ENCODE measurements at regions of chr7 and their contacts with region 1.

Region 1: DNA sequence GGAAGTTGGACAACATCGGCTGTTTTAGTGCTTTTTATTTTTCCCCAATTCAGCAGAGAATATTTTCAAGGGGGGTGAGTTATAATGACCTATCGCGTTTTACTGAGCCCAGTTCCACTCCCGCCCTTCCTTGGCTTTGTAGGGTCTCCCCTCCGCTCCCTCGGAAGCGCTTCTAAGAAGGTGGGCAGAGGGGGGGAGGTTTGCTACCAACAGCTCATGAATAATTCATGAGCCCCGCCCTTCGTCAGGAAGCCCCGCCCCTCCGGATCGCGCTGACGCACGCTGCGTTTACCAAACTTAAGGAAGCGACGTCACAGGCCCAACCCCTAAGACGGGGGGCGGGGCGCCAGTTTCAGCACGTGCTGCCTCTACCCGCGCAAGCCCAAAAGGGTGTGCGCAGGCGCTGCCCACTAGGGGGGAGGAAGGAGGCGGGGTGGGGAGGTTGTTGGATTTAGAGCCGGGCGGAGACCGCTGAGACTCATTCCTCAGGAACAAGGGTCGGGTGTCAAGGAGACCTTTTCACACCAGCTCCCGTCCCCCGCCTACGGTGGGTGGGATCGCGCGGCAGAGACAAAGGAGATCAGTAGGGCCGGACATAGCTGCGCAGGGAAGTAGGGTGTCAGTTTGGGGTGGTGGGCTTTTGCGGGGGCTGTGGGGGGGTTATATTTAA is 529 bp upstream of the MEPCE start:
- DNase-seq: peak; percentile 93 to 100
- ATAC-seq: peak; percentile 63 to 73
- H3K4me3 ChIP-seq: peak overlapping the region; percentile 86
- H3K27ac ChIP-seq: peak overlapping the region; percentile 93 to 100
- H3K4me1 ChIP-seq: peaks cover 26% of the 10 kb centered on the region; the same call in 2 of the 3 replicates
- CTCF ChIP-seq: no peak
- EP300 ChIP-seq: no peak
- POLR2A ChIP-seq: peak; percentile 93
- RAD21 ChIP-seq: no peak

Region 2: DNA sequence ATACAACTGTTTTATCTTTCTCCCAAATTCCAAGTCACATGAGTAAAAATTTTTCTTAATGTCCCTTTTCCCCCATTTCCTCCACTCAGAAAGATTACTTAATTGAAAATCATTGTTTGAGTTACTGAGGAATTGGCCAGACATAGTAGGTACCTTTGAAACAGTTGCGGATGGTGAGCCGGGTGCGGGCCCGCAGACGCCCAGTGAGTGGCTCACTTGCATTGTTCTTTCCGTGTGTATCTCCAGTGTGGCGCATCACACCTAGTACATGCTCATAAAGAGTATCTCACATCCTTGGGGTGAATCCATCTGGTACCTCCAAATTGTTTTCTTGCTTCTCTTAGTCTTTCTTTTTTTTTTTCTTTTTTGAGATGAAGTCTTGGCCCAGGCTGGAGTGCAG is 1536.5 kb before region 1 on chr7:
- CTCF ChIA-PET with region 1: no interaction called
- POLR2A ChIA-PET with region 1: interaction called, 11 read pairs
- DNase-seq: no peak
- ATAC-seq: no peak
- H3K4me3 ChIP-seq: no peak overlapping the region
- H3K27ac ChIP-seq: no peak overlapping the region
- H3K4me1 ChIP-seq: no peaks in the 10 kb centered on the region
- CTCF ChIP-seq: no peak
- EP300 ChIP-seq: no peak
- POLR2A ChIP-seq: no peak
- RAD21 ChIP-seq: no peak

Region 3: GRCh38 chr7:100158229-100159098 is 270.6 kb before region 1 on chr7 and contains the start of gene TRAPPC14:
- CTCF ChIA-PET with region 1: no interaction called
- POLR2A ChIA-PET with region 1: no interaction called
- DNase-seq: peak; percentile 81 to 98
- ATAC-seq: peak; percentile 79 to 89
- H3K4me3 ChIP-seq: peak within 1 kb of the TSS; percentile 90
- H3K27ac ChIP-seq: peak within 1 kb of the TSS; percentile 83 to 96
- H3K4me1 ChIP-seq: peaks cover 46% of the 10 kb centered on the region
- CTCF ChIP-seq: no peak
- EP300 ChIP-seq: no peak
- POLR2A ChIP-seq: peak; percentile 81
- RAD21 ChIP-seq: no peak
- polyA plus RNA-seq, gene TRAPPC14: 3.4 and 5.7 TPM in 2 replicates

Region 4: DNA sequence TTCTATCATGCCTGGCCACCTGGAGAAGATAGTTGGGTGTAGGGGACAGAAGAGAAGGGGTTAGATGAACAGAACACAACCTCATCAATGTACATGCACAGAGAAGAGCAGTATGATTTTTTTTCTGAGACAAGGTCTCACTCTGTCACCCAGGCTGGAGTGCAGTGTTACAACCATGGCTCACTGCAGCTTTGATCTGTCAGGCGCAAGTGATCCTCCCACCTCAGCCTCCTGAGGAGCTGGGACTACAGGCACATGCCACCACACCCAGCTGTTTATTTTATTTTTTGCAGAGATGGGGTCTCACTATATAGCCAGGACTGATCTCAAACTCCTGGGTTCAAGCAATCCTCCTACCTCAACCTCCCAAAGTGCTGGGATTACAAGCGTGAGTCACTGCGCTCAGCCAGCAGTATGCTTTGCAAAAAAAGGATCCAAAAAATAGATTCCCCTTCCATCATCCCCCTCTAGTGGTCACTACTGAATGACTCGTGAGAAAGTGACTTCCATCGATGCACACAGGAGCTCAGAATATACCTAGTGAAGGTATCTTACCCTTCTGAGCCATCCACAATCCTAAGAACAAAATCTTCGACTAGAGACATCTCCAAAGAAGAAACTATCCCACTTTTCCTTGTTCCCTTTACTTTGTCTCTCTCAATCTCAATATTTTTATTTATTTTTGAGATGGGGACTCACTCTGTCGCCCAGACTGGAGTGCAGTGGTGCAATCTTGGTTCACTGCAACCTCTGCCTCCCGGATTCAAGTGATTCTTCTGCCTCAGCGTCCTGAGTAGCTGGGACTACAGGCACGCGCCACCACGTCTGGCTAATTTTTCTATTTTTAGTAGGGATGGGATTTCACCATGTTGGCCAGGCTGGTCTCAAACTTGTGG is 21.6 kb before region 1 on chr7:
- CTCF ChIA-PET with region 1: interaction called, 4 read pairs
- POLR2A ChIA-PET with region 1: interaction called, 16 read pairs
- DNase-seq: peak; percentile 72 to 84
- ATAC-seq: peak; percentile 93 to 94
- H3K4me3 ChIP-seq: no peak overlapping the region
- H3K27ac ChIP-seq: no peak overlapping the region
- H3K4me1 ChIP-seq: no peaks in the 10 kb centered on the region
- CTCF ChIP-seq: peak; percentile 72
- EP300 ChIP-seq: no peak
- POLR2A ChIP-seq: no peak
- RAD21 ChIP-seq: peak; percentile 70 to 77

Region 5: GRCh38 chr7:100444311-100445278 is 15.5 kb after region 1 on chr7:
- CTCF ChIA-PET with region 1: interaction called, 14 read pairs
- POLR2A ChIA-PET with region 1: interaction called, 13 read pairs
- DNase-seq: peak in 1 of 2 experiments; percentile 43
- ATAC-seq: peak; percentile 36 to 58
- H3K4me3 ChIP-seq: no peak overlapping the region
- H3K27ac ChIP-seq: peak overlapping the region in 1 of 2 experiments; percentile 63; a peak in 3 of 6 replicates
- H3K4me1 ChIP-seq: peaks cover 10% of the 10 kb centered on the region; the same call in 2 of the 3 replicates
- CTCF ChIP-seq: no peak
- EP300 ChIP-seq: no peak
- POLR2A ChIP-seq: no peak
- RAD21 ChIP-seq: no peak

Region 6: GRCh38 chr7:100532165-100533022 is 103.3 kb after region 1 on chr7:
- CTCF ChIA-PET with region 1: no interaction called
- POLR2A ChIA-PET with region 1: no interaction called
- DNase-seq: no peak
- ATAC-seq: no peak
- H3K4me3 ChIP-seq: no peak overlapping the region
- H3K27ac ChIP-seq: no peak overlapping the region
- H3K4me1 ChIP-seq: no peaks in the 10 kb centered on the region
- CTCF ChIP-seq: no peak
- EP300 ChIP-seq: no peak
- POLR2A ChIP-seq: no peak
- RAD21 ChIP-seq: no peak

Region 7: DNA sequence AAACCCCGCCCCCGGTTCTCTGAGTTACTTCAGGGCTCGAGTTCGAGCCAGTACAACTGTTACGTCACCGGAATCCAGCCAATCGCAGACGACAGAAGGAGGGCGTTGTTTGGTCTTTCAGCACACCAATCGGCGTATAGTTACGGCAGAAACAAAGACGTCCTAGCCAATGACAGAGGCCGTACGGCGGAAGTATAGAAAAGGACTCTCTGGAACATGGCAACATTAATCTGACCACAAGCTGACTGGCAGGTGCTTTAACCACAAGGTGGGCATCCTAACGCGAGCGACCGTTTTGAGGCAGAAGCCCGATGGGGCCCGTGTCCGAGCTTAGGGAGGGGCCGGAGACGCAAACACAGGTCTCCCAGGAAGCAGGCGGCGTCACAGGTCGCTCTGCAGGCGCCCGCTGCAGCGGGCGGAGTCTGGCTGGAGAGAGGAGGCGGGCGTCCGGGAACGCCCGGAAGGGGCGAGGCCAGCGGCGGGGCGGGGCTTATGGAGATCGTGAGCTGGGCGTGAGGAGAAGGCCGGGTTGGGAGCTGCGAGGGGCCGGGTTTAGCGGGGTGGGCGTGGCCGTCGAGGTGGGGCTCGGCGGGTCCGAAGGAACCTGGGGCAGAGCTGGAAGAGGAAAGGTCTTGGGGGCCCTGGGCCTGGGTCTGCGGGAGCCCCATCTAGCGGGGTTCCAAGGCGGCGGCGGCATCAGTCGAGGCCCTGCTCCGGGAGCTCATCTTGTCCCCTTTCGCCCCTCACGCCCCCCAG is 183.1 kb after region 1 on chr7 and contains the start of gene MOSPD3:
- CTCF ChIA-PET with region 1: no interaction called
- POLR2A ChIA-PET with region 1: interaction called, 12 read pairs
- DNase-seq: peak; percentile 99 to 100
- ATAC-seq: peak; percentile 97
- H3K4me3 ChIP-seq: peak within 1 kb of the TSS; percentile 67
- H3K27ac ChIP-seq: peak within 1 kb of the TSS; percentile 83 to 90
- H3K4me1 ChIP-seq: peaks cover 4% of the 10 kb centered on the region; the same call in 1 of the 3 replicates
- CTCF ChIP-seq: no peak
- EP300 ChIP-seq: no peak
- POLR2A ChIP-seq: peak; percentile 43
- RAD21 ChIP-seq: no peak
- polyA plus RNA-seq, gene MOSPD3: 4.6 and 6.1 TPM in 2 replicates

Region 8: GRCh38 chr7:100852048-100852872 is 423.2 kb after region 1 on chr7 and contains the start of gene SLC12A9:
- CTCF ChIA-PET with region 1: no interaction called
- POLR2A ChIA-PET with region 1: no interaction called
- DNase-seq: peak; percentile 86 to 98
- ATAC-seq: peak; percentile 98 to 99
- H3K4me3 ChIP-seq: peak within 1 kb of the TSS; percentile 77
- H3K27ac ChIP-seq: peak within 1 kb of the TSS; percentile 76 to 85
- H3K4me1 ChIP-seq: 0 out of 3 replicates have a peak, but pooled peaks cover 4% of the 10 kb centered on the region
- CTCF ChIP-seq: peak; percentile 95
- EP300 ChIP-seq: no peak
- POLR2A ChIP-seq: peak; percentile 48; the same call in 1 of the 2 replicates
- RAD21 ChIP-seq: peak; percentile 94 to 98
- polyA plus RNA-seq, gene SLC12A9: 6.2 and 7.0 TPM in 2 replicates

Measured in A549 (cell line).